Mammary epithelial cell (primary cell): ENCODE measurements at regions of chr1 and their contacts with region 1.

Region 1: GRCh38 chr1:51331206-51332100 is 1.1 kb upstream of the TTC39A start:
- DNase-seq: peak; percentile 16
- H3K4me3 ChIP-seq: no peak overlapping the region
- H3K27ac ChIP-seq: no peak overlapping the region
- H3K4me1 ChIP-seq: peaks cover 17% of the 10 kb centered on the region
- H3K27me3 ChIP-seq: no peaks in the 10 kb centered on the region
- CTCF ChIP-seq: no peak

Region 2: DNA sequence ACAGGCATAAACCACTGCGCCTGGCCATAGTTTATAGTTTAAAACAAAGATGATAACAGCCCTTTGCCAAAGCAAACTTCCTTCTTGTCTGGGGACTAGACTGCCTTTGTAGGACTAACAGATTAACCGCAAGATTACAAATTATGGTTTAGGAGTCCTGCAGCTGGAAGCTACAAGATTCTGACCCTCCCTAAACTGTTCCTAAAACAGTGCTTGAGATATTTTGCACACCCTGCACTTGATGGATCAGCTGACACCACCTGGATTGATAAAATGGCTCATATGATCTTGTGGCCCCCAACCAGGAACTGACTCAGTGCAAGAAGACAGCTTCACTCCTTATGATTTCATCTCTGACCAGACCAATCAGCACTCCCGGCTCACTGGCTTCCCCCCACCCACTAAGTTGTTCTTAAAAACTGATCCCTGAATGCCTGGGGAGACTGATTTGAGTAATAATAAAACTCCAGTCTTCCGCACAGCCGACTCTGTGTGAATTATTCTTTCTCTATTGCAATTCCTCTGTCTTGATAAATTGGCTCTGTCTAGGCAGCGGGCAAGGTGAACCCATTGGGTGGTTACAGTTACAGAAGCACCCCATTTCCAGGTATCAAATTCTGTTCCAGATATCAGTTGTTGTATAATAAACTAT is 109.2 kb before region 1 on chr1:
- CTCF ChIA-PET with region 1: no interaction called
- dilution Hi-C with region 1: loop called (anchors 5 kb)
- in situ Hi-C with region 1: no loop called
- intact Hi-C with region 1: no loop called
- DNase-seq: no peak
- H3K4me3 ChIP-seq: no peak overlapping the region
- H3K27ac ChIP-seq: no peak overlapping the region
- H3K4me1 ChIP-seq: no peaks in the 10 kb centered on the region
- H3K27me3 ChIP-seq: peaks cover 2% of the 10 kb centered on the region
- CTCF ChIP-seq: no peak

Region 3: GRCh38 chr1:51284487-51284954 is 46.9 kb before region 1 on chr1:
- CTCF ChIA-PET with region 1: no interaction called
- dilution Hi-C with region 1: no loop called
- in situ Hi-C with region 1: no loop called
- intact Hi-C with region 1: loop called (anchors 1 kb)
- DNase-seq: no peak
- H3K4me3 ChIP-seq: no peak overlapping the region
- H3K27ac ChIP-seq: no peak overlapping the region
- H3K4me1 ChIP-seq: peaks cover 4% of the 10 kb centered on the region
- H3K27me3 ChIP-seq: no peaks in the 10 kb centered on the region
- CTCF ChIP-seq: no peak

Region 4: GRCh38 chr1:51410568-51411460 is 79.4 kb after region 1 on chr1:
- CTCF ChIA-PET with region 1: no interaction called
- dilution Hi-C with region 1: no loop called
- in situ Hi-C with region 1: no loop called
- intact Hi-C with region 1: no loop called
- DNase-seq: no peak
- H3K4me3 ChIP-seq: no peak overlapping the region
- H3K27ac ChIP-seq: no peak overlapping the region
- H3K4me1 ChIP-seq: no peaks in the 10 kb centered on the region
- H3K27me3 ChIP-seq: no peaks in the 10 kb centered on the region
- CTCF ChIP-seq: no peak